CD4-positive, alpha-beta memory T cell (primary cell): ENCODE measurements at regions of chr2 and their contacts with region 1.

Region 1: GRCh38 chr2:201231781-201232466 is 28.4 kb upstream of the CASP8 start:
- DNase-seq: peak; percentile 90 to 94 (median 91)
- H3K4me3 ChIP-seq: peak overlapping the region in 1 of 2 donors; percentile 36
- H3K4me3 Mint-ChIP-seq: peak overlapping the region; percentile 62 to 98 (median 96)
- H3K27ac ChIP-seq: peak overlapping the region; percentile 84
- H3K27ac Mint-ChIP-seq: peak overlapping the region; percentile 79 to 96 (median 90)
- H3K4me1 ChIP-seq: peaks cover 47% of the 10 kb centered on the region
- H3K4me1 Mint-ChIP-seq: peaks cover 32 to 63% (median 42%) of the 10 kb centered on the region in 4 donors
- H3K27me3 ChIP-seq: no peaks in the 10 kb centered on the region
- H3K27me3 Mint-ChIP-seq: no peaks in the 10 kb centered on the region

Region 2: DNA sequence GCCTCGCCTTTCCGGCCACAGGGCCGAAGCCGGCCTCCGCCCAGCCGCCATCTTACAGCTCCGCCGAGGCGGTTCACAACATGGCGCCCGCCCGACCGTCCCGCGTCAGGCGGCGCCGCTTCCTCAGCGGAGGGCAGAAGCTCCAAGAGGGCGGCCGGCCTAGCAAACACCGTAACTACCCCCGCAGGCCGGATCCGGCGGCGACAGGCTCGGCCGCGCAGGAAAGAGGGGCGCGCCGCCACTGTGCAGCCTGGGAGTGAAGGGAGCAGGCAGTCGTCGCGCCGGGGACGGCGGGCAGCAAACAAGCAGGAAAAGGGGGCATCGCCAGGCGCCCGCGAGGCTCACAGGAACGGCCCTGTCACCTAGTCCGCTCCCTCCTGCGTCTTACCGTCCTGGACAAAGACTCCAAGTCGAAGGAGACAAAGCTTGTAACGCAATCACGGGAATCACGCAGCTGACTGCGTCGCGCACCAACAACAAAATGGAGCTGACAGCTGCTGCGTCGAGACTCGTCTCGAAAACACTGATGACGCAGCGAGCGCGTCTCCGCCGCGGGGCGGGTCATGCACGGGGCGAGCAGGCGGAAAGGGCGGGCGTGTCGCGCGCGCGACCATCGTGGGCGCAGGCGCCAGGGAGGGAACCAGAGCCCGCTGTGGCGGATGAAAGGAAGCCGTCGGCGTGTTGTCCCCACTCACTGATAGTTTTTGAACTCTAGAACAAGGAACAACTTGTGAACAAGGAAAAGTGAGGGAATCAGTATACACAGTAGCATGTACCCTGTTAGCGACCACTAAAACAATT is 367.5 kb before region 1 on chr2 and contains the start of gene CLK1:
- CTCF ChIA-PET with region 1: interaction called, 12 read pairs
- POLR2A ChIA-PET with region 1: interaction called, 25 read pairs
- intact Hi-C with region 1: no loop called
- DNase-seq: peak; percentile 93 to 97 (median 94)
- H3K4me3 ChIP-seq: peak within 1 kb of the TSS; percentile 83 to 100
- H3K4me3 Mint-ChIP-seq: peak within 1 kb of the TSS; percentile 91 to 99 (median 96)
- H3K27ac ChIP-seq: peak within 1 kb of the TSS; percentile 100
- H3K27ac Mint-ChIP-seq: peak within 1 kb of the TSS; percentile 89 to 100 (median 100)
- H3K4me1 ChIP-seq: peaks cover 47% of the 10 kb centered on the region
- H3K4me1 Mint-ChIP-seq: peaks cover 28 to 59% (median 41%) of the 10 kb centered on the region in 4 donors
- H3K27me3 ChIP-seq: no peaks in the 10 kb centered on the region
- H3K27me3 Mint-ChIP-seq: no peaks in the 10 kb centered on the region
- total RNA-seq, gene CLK1: 472 to 499 TPM

Region 3: GRCh38 chr2:201118121-201118960 is 113.6 kb before region 1 on chr2:
- CTCF ChIA-PET with region 1: interaction called, 41 read pairs
- POLR2A ChIA-PET with region 1: interaction called, 48 read pairs
- intact Hi-C with region 1: loop called (anchors 1 kb)
- DNase-seq: peak; percentile 75 to 94 (median 78)
- H3K4me3 ChIP-seq: peak overlapping the region; percentile 78 to 98
- H3K4me3 Mint-ChIP-seq: peak overlapping the region; percentile 93 to 100 (median 100)
- H3K27ac ChIP-seq: peak overlapping the region; percentile 91
- H3K27ac Mint-ChIP-seq: peak overlapping the region; percentile 92 to 100 (median 99)
- H3K4me1 ChIP-seq: peaks cover 55% of the 10 kb centered on the region
- H3K4me1 Mint-ChIP-seq: peaks cover 34 to 87% (median 47%) of the 10 kb centered on the region in 4 donors
- H3K27me3 ChIP-seq: no peaks in the 10 kb centered on the region
- H3K27me3 Mint-ChIP-seq: peaks cover 0 to 2% of the 10 kb centered on the region in 2 donors

Region 4: DNA sequence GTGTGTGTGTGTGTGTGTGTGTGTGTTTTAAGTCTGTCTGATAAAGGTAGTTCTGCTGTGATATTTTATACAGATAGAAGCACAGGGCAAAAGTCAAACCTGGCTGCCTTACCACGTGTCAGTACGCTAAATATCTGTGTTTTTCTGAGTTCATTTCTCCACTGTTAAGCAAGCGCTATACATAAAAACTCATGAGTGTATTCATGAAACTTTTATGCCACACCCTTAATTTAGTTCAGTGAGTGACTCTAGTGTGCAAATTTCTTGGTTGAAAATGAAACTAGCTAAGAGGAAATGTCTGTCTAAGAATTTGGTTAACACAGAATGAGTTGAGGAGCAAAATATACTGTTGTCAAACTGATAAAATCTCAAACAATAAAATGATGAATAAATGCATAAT is 37.8 kb before region 1 on chr2:
- CTCF ChIA-PET with region 1: interaction called, 125 read pairs
- POLR2A ChIA-PET with region 1: interaction called, 61 read pairs
- intact Hi-C with region 1: no loop called
- DNase-seq: peak in 3 of 5 donors; percentile 29 to 36 (median 32)
- H3K4me3 ChIP-seq: no peak overlapping the region
- H3K4me3 Mint-ChIP-seq: peak overlapping the region; percentile 54 to 93 (median 80)
- H3K27ac ChIP-seq: peak overlapping the region; percentile 41
- H3K27ac Mint-ChIP-seq: peak overlapping the region; percentile 62 to 95 (median 91)
- H3K4me1 ChIP-seq: peaks cover 77% of the 10 kb centered on the region
- H3K4me1 Mint-ChIP-seq: peaks cover 46 to 79% (median 62%) of the 10 kb centered on the region in 4 donors
- H3K27me3 ChIP-seq: no peaks in the 10 kb centered on the region
- H3K27me3 Mint-ChIP-seq: no peaks in the 10 kb centered on the region

Region 5: GRCh38 chr2:201263779-201264178 is 31.9 kb after region 1 on chr2:
- CTCF ChIA-PET with region 1: interaction called, 108 read pairs
- POLR2A ChIA-PET with region 1: interaction called, 249 read pairs
- intact Hi-C with region 1: loop called (anchors 1 kb)
- DNase-seq: no peak
- H3K4me3 ChIP-seq: peak overlapping the region; percentile 6 to 49
- H3K4me3 Mint-ChIP-seq: peak overlapping the region; percentile 75 to 91 (median 87)
- H3K27ac ChIP-seq: peak overlapping the region; percentile 55
- H3K27ac Mint-ChIP-seq: peak overlapping the region; percentile 57 to 95 (median 84)
- H3K4me1 ChIP-seq: peaks cover 81% of the 10 kb centered on the region
- H3K4me1 Mint-ChIP-seq: peaks cover 50 to 84% (median 65%) of the 10 kb centered on the region in 4 donors
- H3K27me3 ChIP-seq: no peaks in the 10 kb centered on the region
- H3K27me3 Mint-ChIP-seq: no peaks in the 10 kb centered on the region

Region 6: GRCh38 chr2:201451292-201452057 is 219.6 kb after region 1 on chr2 and contains the starts of genes STRADB and TRAK2:
- CTCF ChIA-PET with region 1: interaction called, 11 read pairs
- POLR2A ChIA-PET with region 1: interaction called, 14 read pairs
- intact Hi-C with region 1: loop called (anchors 1 kb)
- DNase-seq: peak; percentile 93 to 98 (median 95)
- H3K4me3 ChIP-seq: peak within 1 kb of the TSS; percentile 38 to 93
- H3K4me3 Mint-ChIP-seq: peak within 1 kb of the TSS; percentile 94 to 99 (median 98)
- H3K27ac ChIP-seq: peak within 1 kb of the TSS; percentile 74
- H3K27ac Mint-ChIP-seq: peak within 1 kb of the TSS; percentile 95 to 98 (median 97)
- H3K4me1 ChIP-seq: peaks cover 49% of the 10 kb centered on the region
- H3K4me1 Mint-ChIP-seq: peaks cover 29 to 52% (median 41%) of the 10 kb centered on the region in 4 donors
- H3K27me3 ChIP-seq: no peaks in the 10 kb centered on the region
- H3K27me3 Mint-ChIP-seq: no peaks in the 10 kb centered on the region
- total RNA-seq, gene STRADB: 17.3 to 20.9 TPM
- total RNA-seq, gene TRAK2: 46.8 to 47.3 TPM